ENCODE measurements at regions of chr22 and their contacts with region 1.

Region 1: GRCh38 chr22:26364066-26365015 is 64.7 kb upstream of the ASPHD2 start:
- DNase-seq: peak; percentile 33 to 58 (median 48)
- H3K4me3 ChIP-seq: no peak overlapping the region
- H3K4me3 Mint-ChIP-seq: no peak overlapping the region
- H3K27ac ChIP-seq: no peak overlapping the region
- H3K27ac Mint-ChIP-seq: no peak overlapping the region
- H3K4me1 ChIP-seq: peaks cover 4% of the 10 kb centered on the region
- H3K4me1 Mint-ChIP-seq: peaks cover 5 to 10% (median 7%) of the 10 kb centered on the region in 4 donors
- H3K27me3 ChIP-seq: peaks cover 11% of the 10 kb centered on the region
- H3K27me3 Mint-ChIP-seq: peaks cover 13 to 22% of the 10 kb centered on the region in 2 donors

Region 2: DNA sequence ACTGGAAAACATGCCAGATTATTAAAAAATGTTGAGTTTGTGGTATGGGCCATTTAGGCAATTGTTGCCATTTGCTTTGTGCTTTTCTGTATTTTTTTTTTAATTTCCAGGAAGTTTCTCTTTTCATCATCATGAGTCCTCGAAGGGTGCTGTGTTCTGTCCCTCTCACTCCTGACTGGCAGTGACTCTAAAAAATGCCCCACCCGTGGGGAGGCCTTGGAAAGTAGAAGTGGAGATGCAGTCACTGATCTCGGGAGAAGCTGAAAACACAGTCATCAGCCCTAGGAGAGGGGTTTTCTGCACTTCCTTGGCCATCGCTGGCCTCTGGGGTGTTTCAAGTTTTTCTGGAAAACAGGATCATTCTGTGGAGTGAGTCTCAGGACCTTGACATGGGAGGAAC is 898.4 kb before region 1 on chr22:
- CTCF ChIA-PET with region 1: no interaction called
- POLR2A ChIA-PET with region 1: no interaction called
- intact Hi-C with region 1: loop called (anchors 2 kb)
- DNase-seq: no peak
- H3K4me3 ChIP-seq: no peak overlapping the region
- H3K4me3 Mint-ChIP-seq: no peak overlapping the region
- H3K27ac ChIP-seq: no peak overlapping the region
- H3K27ac Mint-ChIP-seq: peak overlapping the region in 1 of 7 donors; percentile 63
- H3K4me1 ChIP-seq: no peaks in the 10 kb centered on the region
- H3K4me1 Mint-ChIP-seq: peaks cover 0 to 7% (median 5%) of the 10 kb centered on the region in 4 donors
- H3K27me3 ChIP-seq: no peaks in the 10 kb centered on the region
- H3K27me3 Mint-ChIP-seq: no peaks in the 10 kb centered on the region

Region 3: DNA sequence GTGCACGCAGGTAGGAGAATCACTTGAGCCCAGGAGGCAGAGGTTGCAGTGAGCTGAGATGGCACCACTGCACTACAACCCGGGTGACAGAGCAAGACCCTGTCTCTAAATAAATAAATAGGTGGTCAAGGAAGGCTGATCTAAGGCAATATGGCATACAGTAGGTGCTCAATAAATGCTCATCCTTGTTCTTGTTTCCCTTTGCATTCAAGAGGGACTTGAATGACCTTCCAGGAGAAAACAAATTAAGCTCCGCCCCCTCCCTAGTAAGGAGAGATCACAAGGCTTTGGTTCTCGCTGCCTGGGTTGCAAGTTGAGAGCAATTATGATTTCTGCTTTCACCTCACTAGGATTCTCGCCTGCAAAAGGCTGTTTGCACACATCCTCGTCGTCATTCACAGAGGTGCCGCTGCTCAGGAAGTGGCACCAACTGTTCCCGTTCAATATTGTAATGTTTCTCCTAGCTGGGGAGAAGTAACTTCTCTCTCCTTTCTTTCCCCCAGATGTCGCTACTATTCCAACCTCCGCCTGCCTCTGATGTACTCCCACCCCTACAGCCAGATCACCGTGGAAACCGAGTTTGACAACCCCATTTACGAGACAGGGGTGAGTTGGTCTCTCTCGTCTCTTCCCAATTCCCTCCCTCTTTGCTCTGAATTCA is 13.0 kb after region 1 on chr22:
- CTCF ChIA-PET with region 1: interaction called, 11 read pairs
- POLR2A ChIA-PET with region 1: no interaction called
- intact Hi-C with region 1: no loop called
- DNase-seq: no peak
- H3K4me3 ChIP-seq: no peak overlapping the region
- H3K4me3 Mint-ChIP-seq: peak overlapping the region in 4 of 8 donors; percentile 0 to 30 (median 8)
- H3K27ac ChIP-seq: no peak overlapping the region
- H3K27ac Mint-ChIP-seq: no peak overlapping the region
- H3K4me1 ChIP-seq: peaks cover 6% of the 10 kb centered on the region
- H3K4me1 Mint-ChIP-seq: peaks cover 4 to 7% (median 5%) of the 10 kb centered on the region in 4 donors
- H3K27me3 ChIP-seq: no peaks in the 10 kb centered on the region
- H3K27me3 Mint-ChIP-seq: peaks cover 40 to 45% of the 10 kb centered on the region in 2 donors

Region 4: DNA sequence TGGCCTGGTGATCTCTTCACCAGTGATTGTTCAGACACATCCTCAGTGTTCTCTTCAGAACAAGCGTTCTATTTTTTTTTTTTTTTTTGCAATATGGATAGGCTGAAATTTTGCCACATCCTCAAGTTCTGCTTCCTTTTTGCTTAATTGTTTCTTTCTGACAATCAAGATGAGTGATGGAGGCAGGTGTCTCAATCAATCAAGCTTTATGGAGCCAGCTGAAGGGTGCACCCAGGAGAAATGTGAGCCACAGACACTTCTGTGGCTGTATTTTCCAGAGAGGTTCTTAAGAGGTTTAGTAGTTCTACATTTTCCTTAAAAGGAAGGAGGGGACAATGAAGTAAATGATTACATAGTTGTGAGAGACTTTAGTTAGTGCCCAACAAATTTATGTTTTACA is 20.8 kb after region 1 on chr22:
- CTCF ChIA-PET with region 1: interaction called, 39 read pairs
- POLR2A ChIA-PET with region 1: no interaction called
- intact Hi-C with region 1: no loop called
- DNase-seq: no peak
- H3K4me3 ChIP-seq: no peak overlapping the region
- H3K4me3 Mint-ChIP-seq: no peak overlapping the region
- H3K27ac ChIP-seq: no peak overlapping the region
- H3K27ac Mint-ChIP-seq: no peak overlapping the region
- H3K4me1 ChIP-seq: no peaks in the 10 kb centered on the region
- H3K4me1 Mint-ChIP-seq: no peaks in the 10 kb centered on the region
- H3K27me3 ChIP-seq: peaks cover 5% of the 10 kb centered on the region
- H3K27me3 Mint-ChIP-seq: peaks cover 24 to 42% of the 10 kb centered on the region in 2 donors

Region 5: GRCh38 chr22:26398741-26399153 is 34.4 kb after region 1 on chr22:
- CTCF ChIA-PET with region 1: interaction called, 18 read pairs
- POLR2A ChIA-PET with region 1: no interaction called
- intact Hi-C with region 1: no loop called
- DNase-seq: peak; percentile 36 to 56 (median 46)
- H3K4me3 ChIP-seq: no peak overlapping the region
- H3K4me3 Mint-ChIP-seq: no peak overlapping the region
- H3K27ac ChIP-seq: no peak overlapping the region
- H3K27ac Mint-ChIP-seq: no peak overlapping the region
- H3K4me1 ChIP-seq: no peaks in the 10 kb centered on the region
- H3K4me1 Mint-ChIP-seq: no peaks in the 10 kb centered on the region
- H3K27me3 ChIP-seq: no peaks in the 10 kb centered on the region
- H3K27me3 Mint-ChIP-seq: peaks cover 5 to 6% of the 10 kb centered on the region in 2 donors

Region 6: GRCh38 chr22:26461188-26461810 is 97.0 kb after region 1 on chr22:
- CTCF ChIA-PET with region 1: interaction called, 79 read pairs
- POLR2A ChIA-PET with region 1: no interaction called
- intact Hi-C with region 1: no loop called
- DNase-seq: peak in 3 of 5 donors; percentile 17 to 22 (median 19)
- H3K4me3 ChIP-seq: no peak overlapping the region
- H3K4me3 Mint-ChIP-seq: no peak overlapping the region
- H3K27ac ChIP-seq: no peak overlapping the region
- H3K27ac Mint-ChIP-seq: peak overlapping the region in 1 of 7 donors; percentile 16
- H3K4me1 ChIP-seq: no peaks in the 10 kb centered on the region
- H3K4me1 Mint-ChIP-seq: peaks cover 0 to 5% (median 0%) of the 10 kb centered on the region in 4 donors
- H3K27me3 ChIP-seq: no peaks in the 10 kb centered on the region
- H3K27me3 Mint-ChIP-seq: no peaks in the 10 kb centered on the region

Region 7: GRCh38 chr22:26502688-26503561 is 138.6 kb after region 1 on chr22:
- CTCF ChIA-PET with region 1: interaction called, 12 read pairs
- POLR2A ChIA-PET with region 1: no interaction called
- intact Hi-C with region 1: no loop called
- DNase-seq: peak; percentile 57 to 69 (median 65)
- H3K4me3 ChIP-seq: no peak overlapping the region
- H3K4me3 Mint-ChIP-seq: peak overlapping the region in 7 of 8 donors; percentile 13 to 76 (median 49)
- H3K27ac ChIP-seq: no peak overlapping the region
- H3K27ac Mint-ChIP-seq: peak overlapping the region; percentile 57 to 93 (median 79)
- H3K4me1 ChIP-seq: peaks cover 22% of the 10 kb centered on the region
- H3K4me1 Mint-ChIP-seq: peaks cover 17 to 27% (median 23%) of the 10 kb centered on the region in 4 donors
- H3K27me3 ChIP-seq: no peaks in the 10 kb centered on the region
- H3K27me3 Mint-ChIP-seq: no peaks in the 10 kb centered on the region

Measured in CD4-positive, alpha-beta memory T cell (primary cell).